Posterior vena cava (tissue), 2 donors: ENCODE measurements at regions of chr22 and their contacts with region 1.

Region 1: DNA sequence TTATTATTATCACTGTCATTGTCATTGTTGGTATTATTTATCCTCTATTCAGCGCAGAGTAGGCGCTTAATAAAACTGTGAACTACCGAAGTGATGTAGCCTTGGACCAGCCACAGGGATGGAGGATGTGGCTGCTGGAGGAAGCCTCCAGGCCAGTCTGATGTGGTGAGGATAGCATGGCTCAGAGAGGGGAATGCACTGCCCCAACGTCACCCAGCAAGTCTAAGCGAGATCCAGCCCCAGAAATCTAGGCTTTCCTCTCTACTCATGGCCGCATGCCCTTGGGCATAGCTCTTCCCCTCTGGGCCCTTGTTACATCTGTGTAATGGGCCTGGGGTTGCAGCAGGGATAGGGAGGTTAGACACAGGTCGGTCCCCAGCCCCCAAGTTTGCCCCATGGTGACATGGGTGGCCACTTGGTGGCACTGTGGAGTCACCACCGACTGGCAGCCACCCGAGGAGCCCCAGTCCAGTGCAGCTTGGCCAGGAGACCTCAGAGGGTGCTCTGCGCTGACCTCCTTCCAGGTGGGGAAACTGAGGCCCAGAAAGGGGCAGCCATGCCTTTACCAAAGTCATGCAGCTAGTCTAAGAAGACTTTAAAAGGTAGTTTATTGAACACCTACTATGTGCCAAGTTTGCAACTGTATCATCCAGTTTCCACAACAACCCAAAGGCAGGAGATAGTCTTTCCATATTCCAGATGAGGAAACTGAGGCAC is 395.7 kb downstream of the MN1 start:
- DNase-seq: no peak

Region 2: GRCh38 chr22:26756675-26757293 is 649.0 kb before region 1 on chr22:
- intact Hi-C with region 1: loop called (anchors 10 kb)
- DNase-seq: peak; percentile 89

Region 3: DNA sequence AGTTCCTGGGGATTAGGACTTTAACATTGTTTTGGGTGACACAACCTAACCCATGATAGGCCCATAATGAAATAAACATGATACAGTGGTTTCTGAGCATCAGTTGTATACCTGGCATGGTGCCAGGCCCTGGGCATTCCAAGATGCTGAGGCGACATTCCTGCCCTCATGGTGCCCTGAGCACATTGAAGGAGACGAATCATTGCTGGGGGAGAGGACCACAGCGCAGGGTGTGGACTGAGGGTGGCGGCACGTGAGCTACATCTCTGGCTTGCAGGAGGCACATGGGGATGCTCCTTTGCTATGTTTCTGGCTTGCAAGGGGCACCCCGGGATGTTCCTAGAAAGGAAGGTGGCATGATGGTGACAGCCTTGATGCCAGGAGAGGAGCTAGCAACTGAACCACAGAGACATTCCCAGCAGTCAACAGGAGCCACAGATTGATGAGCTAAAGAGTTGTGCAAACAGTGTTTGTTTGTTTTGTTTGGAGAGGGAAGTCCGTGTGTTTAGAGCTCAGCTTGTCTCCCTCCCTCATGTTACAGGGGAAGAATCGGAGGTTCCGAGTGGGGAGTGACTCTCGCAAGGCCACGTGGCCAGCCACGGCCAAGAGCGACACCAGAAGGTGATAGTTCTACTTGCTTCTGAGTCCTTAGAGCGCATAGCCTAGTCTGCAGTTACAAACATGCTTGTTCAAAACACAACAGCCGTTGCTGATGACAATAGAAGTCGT is 642.0 kb before region 1 on chr22:
- intact Hi-C with region 1: loop called (anchors 10 kb)
- DNase-seq: no peak

Region 4: GRCh38 chr22:27799334-27800249 is 393.8 kb after region 1 on chr22:
- intact Hi-C with region 1: loop called (anchors 5 to 10 kb)
- DNase-seq: no peak

Region 5: DNA sequence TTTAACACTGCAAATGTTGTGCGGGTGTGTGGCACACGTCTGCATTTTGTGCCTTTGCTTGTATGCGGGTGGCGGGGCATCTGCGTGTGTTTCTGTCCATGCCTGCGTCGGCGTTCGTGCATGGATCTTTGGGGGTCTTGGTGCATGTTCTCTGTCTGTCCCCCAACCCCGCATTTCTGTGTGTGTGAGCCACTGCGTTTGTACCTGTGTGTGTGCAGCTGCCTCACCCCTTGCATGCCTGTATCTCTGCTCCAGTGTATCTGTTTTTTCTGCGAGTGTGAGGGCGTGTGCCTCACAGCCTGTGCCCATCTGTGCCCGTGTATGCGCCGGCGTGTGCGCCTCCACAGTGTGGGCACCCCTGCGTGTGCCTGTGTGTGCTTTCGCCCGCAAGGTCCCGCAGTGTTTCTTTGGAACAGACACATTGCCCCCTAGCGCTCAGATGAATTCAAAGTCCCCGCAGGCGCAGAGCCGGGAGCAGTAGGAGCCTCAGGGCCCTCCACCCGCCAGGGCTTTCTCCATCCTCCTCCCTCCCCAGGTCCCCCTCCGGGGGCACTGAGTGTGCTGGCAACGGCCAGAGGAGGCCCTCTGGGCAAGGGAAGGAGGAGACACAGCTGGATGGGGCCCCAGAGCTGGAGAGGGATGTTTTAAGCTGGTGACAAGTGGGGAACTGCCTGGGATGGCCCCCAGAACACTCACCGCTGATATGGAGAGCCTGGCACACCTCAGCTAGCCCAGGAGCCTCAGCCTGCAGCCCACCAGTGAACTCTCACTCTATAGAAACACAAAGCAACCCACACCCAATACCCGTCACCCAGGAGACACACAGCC is 398.9 kb after region 1 on chr22:
- intact Hi-C with region 1: loop called (anchors 5 to 10 kb)
- DNase-seq: peak; percentile 88